Right ventricle myocardium superior (tissue), 1 donor: ENCODE measurements at regions of chr22 and their contacts with region 1.

Region 1: GRCh38 chr22:19970479-19971275 is 29.1 kb upstream of the TXNRD2 start:
- DNase-seq: peak; percentile 85
- ATAC-seq: peak; percentile 79

Region 2: DNA sequence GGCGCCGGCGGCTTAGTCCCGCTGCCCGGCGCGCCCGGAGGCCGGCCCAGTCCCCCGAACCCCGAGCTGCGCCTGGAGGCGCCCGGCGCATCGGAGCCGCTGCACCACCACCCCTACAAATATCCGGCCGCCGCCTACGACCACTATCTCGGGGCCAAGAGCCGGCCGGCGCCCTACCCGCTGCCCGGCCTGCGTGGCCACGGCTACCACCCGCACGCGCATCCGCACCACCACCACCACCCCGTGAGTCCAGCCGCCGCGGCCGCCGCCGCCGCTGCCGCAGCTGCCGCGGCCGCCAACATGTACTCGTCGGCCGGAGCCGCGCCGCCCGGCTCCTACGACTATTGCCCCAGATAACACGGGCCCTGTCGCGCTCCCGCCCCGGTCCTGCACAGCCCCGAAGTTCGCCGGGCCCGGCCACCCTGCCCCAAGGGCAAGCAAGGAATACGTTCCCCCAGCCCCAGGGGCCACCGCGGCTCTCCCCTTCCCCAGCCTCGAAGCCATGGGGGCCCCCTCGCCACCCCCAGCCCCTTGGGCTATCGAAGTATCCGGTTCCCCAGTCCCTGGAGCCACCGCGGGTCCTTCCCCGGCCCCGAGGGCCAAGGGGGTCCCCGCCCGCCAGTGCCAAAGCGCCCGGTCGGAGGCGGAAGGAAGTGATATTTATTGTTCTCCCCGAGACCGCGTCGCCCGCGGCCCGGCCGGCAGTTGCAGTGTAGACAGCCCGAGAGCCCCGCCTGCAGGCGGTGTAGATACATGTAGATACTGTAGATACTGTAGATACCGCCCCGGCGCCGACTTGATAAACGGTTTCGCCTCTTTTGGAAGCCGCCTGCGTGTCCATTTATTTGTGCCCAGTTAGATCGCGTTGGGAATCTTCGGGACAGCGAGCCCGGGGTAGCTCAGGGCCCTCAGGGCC is 203.9 kb before region 1 on chr22:
- intact Hi-C with region 1: no loop called
- DNase-seq: peak; percentile 82
- ATAC-seq: peak; percentile 76

Region 3: DNA sequence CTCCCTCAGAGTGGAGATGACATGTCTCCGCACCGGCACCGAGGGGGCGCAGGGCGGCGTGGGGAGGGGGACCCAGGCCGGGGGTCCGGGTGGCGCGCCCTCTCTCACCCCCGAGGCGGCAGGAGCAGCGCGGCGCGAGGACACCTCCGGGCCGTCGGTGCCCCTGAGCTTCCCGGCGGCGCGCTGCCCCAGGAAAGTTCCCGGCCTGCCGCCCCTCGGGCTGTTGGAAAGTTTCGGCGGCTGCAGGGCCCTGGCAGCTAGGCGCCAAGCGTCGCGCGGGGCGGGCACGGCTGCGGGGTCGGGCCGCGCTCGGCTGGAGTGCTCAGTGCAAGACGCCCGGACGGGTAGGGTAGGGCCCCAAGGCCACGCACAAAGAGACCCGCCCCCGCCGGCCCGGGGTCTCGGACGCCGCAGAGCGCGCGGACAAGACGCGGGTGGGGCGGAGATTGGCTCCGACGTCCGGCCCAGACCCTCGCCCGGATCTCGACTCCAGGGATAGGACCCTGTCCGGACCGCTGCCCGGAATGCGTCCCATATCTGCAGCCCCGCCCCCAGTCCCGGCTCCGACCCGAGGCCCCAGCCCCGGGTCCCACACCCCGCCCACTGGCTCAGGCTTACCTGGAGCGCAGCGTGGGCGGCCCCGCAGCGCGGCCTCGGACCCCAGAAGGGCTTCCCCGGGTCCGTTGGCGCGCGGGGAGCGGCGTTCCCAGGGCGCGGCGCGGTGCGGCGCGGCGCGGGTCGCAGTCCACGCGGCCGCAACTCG is 45.5 kb after region 1 on chr22:
- intact Hi-C with region 1: loop called (anchors 2 kb)
- DNase-seq: peak; percentile 49
- ATAC-seq: no peak

Region 4: GRCh38 chr22:20116951-20117645 is 146.4 kb after region 1 on chr22 and contains the start of gene TRMT2A:
- intact Hi-C with region 1: loop called (anchors 10 kb)
- DNase-seq: peak; percentile 99
- ATAC-seq: peak; percentile 95
- total RNA-seq, gene TRMT2A: 21.9 TPM

Region 5: DNA sequence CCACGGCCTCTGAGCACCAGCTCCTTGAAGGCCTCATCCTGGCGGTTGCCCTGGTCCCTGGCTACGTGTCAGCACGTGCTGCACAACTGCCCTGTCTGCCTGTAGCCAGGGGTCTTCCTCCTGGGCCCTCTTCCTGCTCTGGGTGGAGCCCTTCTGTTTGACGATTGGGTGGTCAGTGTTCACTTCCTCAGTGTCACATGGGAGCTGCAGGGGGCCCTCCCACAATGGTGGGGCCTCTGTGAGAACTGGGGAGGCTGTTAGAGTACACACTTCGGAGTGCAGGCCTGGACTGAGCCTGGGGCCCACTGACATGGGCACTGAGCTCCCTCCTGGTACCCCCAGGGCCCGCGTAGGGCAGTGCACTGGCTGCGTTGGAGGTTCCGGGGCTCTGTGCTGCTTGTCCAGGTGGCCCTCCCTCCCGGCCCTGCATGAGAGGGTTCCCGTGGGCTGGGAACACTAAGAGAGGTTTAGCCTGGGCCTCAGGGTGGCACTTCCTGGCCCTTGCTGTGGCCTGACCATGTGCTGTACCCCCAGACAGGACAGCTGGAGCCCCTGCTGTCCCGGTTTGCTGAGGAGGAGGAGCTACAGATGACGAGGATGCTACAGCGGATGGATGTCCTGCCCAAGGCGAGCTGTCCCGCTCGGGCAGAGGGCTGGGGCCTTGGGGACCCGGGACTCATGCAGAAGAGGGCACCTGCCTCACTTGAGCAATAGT is 335.4 kb after region 1 on chr22:
- intact Hi-C with region 1: no loop called
- DNase-seq: peak; percentile 22
- ATAC-seq: no peak

Region 6: DNA sequence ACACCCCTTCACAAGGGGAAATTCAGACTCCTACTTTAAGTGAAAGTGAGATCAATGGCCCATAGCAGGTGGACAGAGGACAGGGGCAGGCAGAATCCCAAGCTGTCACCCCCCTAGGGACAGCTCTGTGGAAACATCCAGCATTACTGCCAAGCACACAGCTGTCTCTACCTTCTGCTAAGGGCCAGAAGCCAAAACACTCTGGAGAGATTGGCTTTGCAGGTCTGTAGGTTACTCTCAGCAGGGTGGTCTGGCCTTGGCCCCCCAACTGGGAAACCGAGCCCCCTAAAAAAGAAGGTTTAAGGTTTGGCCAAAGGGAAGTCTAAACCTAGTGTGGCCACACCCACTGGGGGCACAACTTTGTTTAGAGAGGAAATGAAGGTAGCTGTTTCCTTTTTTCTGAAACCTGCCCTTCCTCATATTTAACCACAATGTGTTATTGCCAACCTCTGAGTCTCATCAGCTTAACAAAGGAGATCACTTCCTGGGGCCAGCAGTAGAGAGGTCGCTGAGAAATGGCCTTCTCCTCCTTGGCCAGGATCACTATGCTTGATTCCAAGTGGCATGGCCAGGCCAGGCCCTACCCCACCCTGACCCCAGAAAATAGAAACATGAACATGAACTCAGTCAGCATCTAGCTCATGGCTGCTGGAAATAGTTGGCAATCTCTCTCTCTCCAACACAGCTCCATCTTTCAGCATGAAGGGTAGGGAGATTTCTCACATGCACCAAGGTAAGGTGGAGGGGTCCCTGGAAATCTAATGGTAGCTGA is 492.8 kb after region 1 on chr22:
- intact Hi-C with region 1: no loop called
- DNase-seq: no peak
- ATAC-seq: peak; percentile 38